PC-9 (cell line): ENCODE measurements at regions of chr6 and their contacts with region 1.

Region 1: DNA sequence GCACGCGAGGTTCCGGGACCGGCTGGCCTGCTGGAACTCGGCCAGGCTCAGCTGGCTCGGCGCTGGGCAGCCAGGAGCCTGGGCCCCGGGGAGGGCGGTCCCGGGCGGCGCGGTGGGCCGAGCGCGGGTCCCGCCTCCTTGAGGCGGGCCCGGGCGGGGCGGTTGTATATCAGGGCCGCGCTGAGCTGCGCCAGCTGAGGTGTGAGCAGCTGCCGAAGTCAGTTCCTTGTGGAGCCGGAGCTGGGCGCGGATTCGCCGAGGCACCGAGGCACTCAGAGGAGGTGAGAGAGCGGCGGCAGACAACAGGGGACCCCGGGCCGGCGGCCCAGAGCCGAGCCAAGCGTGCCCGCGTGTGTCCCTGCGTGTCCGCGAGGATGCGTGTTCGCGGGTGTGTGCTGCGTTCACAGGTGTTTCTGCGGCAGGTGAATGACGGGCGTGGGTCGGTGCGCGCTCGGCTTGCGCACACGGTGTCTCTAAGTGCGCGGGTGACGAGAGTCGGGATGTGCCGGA is at the start of gene CDKN1A:
- DNase-seq: peak; percentile 79 to 93
- H3K4me3 ChIP-seq: peak within 1 kb of the TSS; percentile 66
- H3K27ac ChIP-seq: peak within 1 kb of the TSS; percentile 66
- H3K4me1 ChIP-seq: peaks cover 30% of the 10 kb centered on the region
- H3K27me3 ChIP-seq: no peaks in the 10 kb centered on the region
- CTCF ChIP-seq: no peak
- total RNA-seq, gene CDKN1A: 14.3 and 14.8 TPM in 2 replicates

Region 2: GRCh38 chr6:36442671-36443470 is 235.7 kb before region 1 on chr6 and contains the starts of genes KCTD20 and PXT1:
- CTCF ChIA-PET with region 1: no interaction called
- POLR2A ChIA-PET with region 1: no interaction called
- intact Hi-C with region 1: loop called (anchors 5 kb)
- DNase-seq: peak; percentile 67 to 88
- H3K4me3 ChIP-seq: peak within 1 kb of the TSS; percentile 75
- H3K27ac ChIP-seq: peak within 1 kb of the TSS; percentile 92
- H3K4me1 ChIP-seq: peaks cover 25% of the 10 kb centered on the region
- H3K27me3 ChIP-seq: no peaks in the 10 kb centered on the region
- CTCF ChIP-seq: no peak
- total RNA-seq, gene KCTD20: 34.2 and 42.5 TPM in 2 replicates
- total RNA-seq, gene PXT1: not detected in 2 replicates

Region 3: GRCh38 chr6:36615018-36615761 is 63.4 kb before region 1 on chr6:
- CTCF ChIA-PET with region 1: interaction called, 11 read pairs
- POLR2A ChIA-PET with region 1: no interaction called
- intact Hi-C with region 1: loop called (anchors 1 kb)
- DNase-seq: peak; percentile 43 to 63
- H3K4me3 ChIP-seq: no peak overlapping the region
- H3K27ac ChIP-seq: no peak overlapping the region
- H3K4me1 ChIP-seq: peaks cover 24% of the 10 kb centered on the region
- H3K27me3 ChIP-seq: no peaks in the 10 kb centered on the region
- CTCF ChIP-seq: peak; percentile 83

Region 4: DNA sequence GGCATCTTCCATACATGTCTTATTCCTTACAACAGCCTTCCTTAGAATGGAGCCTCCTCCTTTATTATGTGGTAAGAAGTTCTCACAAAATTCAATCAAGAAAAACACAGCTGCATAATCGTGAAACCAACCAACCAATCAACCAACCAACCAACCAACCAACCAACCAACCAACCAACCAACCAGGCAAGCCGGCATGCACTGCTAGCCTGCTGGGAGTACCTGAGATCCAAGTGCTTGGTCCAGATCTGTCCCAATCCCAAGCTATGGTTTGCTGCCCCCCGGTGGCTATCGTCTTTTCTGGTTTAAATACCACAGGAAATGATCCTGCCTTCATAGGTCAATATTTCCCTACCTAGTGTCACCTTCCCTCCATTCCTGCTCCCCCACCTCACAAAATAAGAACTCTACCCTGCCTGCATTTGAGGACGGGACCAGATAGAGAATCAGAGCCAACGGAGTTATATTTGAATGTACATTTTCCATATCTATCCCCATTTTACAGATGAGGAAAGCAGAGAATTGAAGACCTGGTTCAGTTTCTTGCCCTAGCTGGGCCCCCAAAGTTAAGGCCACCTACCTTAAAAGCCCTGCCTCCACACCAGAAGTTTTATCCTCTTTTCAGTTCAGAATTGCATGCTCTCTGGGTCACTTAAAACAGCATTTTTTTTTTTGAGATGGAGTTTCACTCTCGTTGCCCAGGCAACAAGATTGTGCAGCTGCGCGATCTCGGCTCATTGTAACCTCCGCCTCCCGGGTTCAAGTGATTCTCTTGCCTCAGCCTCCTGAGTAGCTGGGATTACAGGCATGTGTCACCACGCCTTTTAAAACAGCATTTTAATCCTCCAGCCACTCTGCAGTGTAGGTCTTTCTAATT is 46.2 kb after region 1 on chr6:
- CTCF ChIA-PET with region 1: no interaction called
- POLR2A ChIA-PET with region 1: no interaction called
- intact Hi-C with region 1: loop called (anchors 2 kb)
- DNase-seq: peak; percentile 49 to 67
- H3K4me3 ChIP-seq: no peak overlapping the region
- H3K27ac ChIP-seq: no peak overlapping the region
- H3K4me1 ChIP-seq: no peaks in the 10 kb centered on the region
- H3K27me3 ChIP-seq: no peaks in the 10 kb centered on the region
- CTCF ChIP-seq: peak; percentile 79